Heart right ventricle (tissue), 16 donors: ENCODE measurements at regions of chr2 and their contacts with region 1.

Region 1: GRCh38 chr2:49861821-49862220 is 707.5 kb upstream of the FSHR start:
- DNase-seq: no peak
- ATAC-seq: peak in 3 of 8 donors; percentile 22 to 39 (median 23)
- H3K4me3 ChIP-seq: no peak overlapping the region
- H3K27ac ChIP-seq: no peak overlapping the region
- H3K4me1 ChIP-seq: peaks cover 0 to 16% (median 0%) of the 10 kb centered on the region in 9 donors
- H3K27me3 ChIP-seq: no peaks in the 10 kb centered on the region
- CTCF ChIP-seq: no peak

Region 2: DNA sequence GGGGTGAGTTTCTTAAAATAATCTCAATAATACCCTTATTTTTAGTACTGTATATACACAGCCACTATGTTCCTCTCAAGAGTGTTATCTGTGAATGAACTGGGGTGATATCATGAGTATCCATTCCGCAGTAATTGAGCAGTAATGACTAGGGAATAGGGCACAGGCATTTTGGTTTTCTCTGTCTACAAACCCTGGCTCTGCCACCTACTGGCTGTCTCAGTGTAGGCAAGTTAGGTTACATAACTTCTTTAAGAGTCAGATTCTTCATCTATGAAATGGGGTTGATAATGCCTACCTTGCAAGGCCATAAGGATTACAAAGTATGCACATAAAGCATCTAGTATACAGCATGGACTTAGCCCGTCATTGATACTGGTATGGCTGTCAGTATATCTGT is 614.4 kb after region 1 on chr2:
- intact Hi-C with region 1: no loop called
- DNase-seq: no peak
- ATAC-seq: no peak
- H3K4me3 ChIP-seq: no peak overlapping the region
- H3K27ac ChIP-seq: no peak overlapping the region
- H3K4me1 ChIP-seq: no peaks in the 10 kb centered on the region
- H3K27me3 ChIP-seq: no peaks in the 10 kb centered on the region
- CTCF ChIP-seq: no peak

Region 3: DNA sequence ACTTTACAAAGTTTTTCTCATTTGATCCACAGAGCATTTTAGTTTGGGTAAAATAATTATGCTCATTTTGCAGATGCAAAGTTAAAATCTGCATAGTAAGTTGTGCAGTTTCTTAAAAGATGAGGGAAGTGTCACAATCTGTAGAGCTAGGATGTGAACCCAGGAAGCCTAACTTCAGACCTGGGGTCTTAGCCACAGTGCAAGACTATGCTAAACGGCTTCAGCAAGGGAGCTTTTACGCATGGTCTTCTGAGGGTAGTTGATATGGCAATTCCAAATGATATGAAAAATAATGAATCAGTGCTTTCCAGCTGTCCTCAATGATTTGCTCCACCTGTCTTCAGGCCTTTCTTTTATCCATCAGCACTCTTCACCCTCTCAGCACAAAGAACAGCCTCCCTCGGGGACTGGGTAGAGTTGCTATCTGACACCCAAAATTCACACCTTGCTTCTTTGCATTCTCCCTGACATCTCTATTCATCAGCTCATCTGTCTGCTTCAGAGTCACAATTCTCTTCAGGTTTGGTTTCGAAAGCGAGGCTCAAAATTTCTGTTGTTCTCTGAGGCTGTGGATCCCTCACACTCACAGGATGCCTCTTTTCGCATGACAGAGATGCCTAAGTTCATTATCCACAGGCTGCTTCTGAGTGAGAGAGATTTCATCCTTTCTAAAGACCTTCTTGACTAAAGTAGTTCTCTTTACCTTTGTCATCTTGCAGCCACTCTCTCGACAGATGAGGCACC is 867.7 kb after region 1 on chr2:
- intact Hi-C with region 1: loop called in 1 of 10 experiments (anchors 5 kb)
- DNase-seq: no peak
- ATAC-seq: no peak
- H3K4me3 ChIP-seq: no peak overlapping the region
- H3K27ac ChIP-seq: no peak overlapping the region
- H3K4me1 ChIP-seq: no peaks in the 10 kb centered on the region
- H3K27me3 ChIP-seq: no peaks in the 10 kb centered on the region
- CTCF ChIP-seq: no peak